ENCODE measurements at regions of chr5 and their contacts with region 1.

Region 1: DNA sequence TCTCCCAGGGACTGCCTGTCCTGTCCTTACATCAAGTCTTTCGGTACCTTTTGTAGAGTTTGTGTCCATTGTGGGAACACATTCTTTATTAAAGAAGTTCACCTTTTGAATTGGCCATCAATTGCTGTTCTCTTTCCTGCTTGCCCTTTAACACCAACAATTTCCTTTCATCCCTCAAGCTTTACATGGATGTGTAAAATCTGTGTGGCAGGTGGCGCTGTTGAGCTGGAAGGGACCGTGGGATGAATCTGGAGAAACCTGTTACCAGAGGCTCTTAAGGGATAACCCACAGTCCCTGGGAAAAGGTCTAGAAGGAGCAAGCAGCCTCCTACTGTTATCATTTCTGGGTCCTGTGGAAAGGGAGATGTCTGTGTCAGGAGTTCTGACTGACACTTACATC is 7.9 kb upstream of the ZFP62 start:
- DNase-seq: peak; percentile 85
- ATAC-seq: peak; percentile 76 to 80

Region 2: GRCh38 chr5:181159286-181159829 is 290.4 kb after region 1 on chr5:
- intact Hi-C with region 1: loop called in 1 of 2 experiments (anchors 5 kb)
- DNase-seq: peak; percentile 81
- ATAC-seq: peak; percentile 92